ENCODE measurements at regions of chr12 and their contacts with region 1.

Region 1: DNA sequence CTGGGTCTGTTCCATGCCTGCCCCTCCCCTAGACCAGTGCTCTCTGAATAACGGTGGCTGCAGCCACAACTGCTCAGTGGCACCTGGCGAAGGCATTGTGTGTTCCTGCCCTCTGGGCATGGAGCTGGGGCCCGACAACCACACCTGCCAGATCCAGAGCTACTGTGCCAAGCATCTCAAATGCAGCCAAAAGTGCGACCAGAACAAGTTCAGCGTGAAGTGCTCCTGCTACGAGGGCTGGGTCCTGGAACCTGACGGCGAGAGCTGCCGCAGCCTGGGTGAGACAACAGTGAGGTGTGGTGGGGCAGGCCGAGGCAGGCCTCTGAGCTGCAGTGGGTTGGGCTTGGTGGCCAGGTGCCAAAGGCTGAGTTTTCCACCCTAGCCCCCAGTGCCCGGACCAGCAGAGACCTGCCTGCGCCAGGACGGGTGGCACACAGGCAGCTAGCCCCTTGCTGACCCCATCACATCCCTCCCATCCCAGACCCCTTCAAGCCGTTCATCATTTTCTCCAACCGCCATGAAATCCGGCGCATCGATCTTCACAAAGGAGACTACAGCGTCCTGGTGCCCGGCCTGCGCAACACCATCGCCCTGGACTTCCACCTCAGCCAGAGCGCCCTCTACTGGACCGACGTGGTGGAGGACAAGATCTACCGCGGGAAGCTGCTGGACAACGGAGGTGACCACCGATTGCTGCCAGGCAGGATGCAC is 28.2 kb upstream of the LRP1-AS start:
- DNase-seq: peak; percentile 56 to 88 (median 72)
- H3K4me3 ChIP-seq: no peak overlapping the region
- H3K27ac ChIP-seq: no peak overlapping the region
- H3K4me1 ChIP-seq: no peaks in the 10 kb centered on the region
- H3K27me3 ChIP-seq: no peaks in the 10 kb centered on the region
- CTCF ChIP-seq: peak; percentile 41

Region 2: DNA sequence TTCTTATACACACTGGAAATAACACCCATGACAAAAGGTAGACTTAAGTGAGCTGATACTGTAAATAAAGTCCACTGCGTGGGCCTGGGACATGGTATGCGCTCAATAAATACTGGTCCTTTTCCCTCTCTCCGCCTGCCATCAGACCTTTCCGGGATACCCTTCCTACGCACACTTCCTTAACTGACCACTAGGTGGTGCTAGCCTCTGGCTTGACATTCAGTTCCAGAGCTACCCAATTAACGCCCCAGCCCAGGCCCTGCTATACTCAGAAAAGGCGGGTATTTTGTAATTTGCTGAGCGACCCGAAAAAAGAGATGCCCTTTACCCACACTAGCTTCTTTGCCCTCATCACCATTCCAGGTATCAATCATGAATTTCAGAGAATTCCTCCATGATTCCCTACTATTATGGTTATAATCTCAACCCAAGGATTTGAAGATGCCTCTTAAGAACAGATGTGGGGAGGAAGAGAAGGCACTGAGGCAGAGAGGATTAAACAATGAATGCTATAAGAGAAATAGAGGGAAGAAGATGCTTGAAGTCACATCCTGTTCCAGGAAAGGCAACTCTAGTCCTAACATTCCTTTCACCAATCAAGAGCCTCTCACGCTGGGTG is 51.2 kb before region 1 on chr12:
- intact Hi-C with region 1: loop called (anchors 5 kb)
- DNase-seq: peak in 4 of 5 donors; percentile 79 to 90 (median 82)
- H3K4me3 ChIP-seq: no peak overlapping the region
- H3K27ac ChIP-seq: no peak overlapping the region
- H3K4me1 ChIP-seq: peaks cover 0 to 8% (median 5%) of the 10 kb centered on the region in 3 donors
- H3K27me3 ChIP-seq: no peaks in the 10 kb centered on the region
- CTCF ChIP-seq: peak; percentile 98

Measured in kidney (tissue), 22 donors.